ENCODE measurements at regions of chr1 and their contacts with region 1.

Region 1: GRCh38 chr1:157992031-157992832 is 1.2 kb upstream of the KIRREL1 start:
- DNase-seq: peak; percentile 70
- CTCF ChIP-seq: peak; percentile 88

Region 2: GRCh38 chr1:157862114-157863070 is 129.8 kb before region 1 on chr1:
- CTCF ChIA-PET with region 1: no interaction called
- POLR2A ChIA-PET with region 1: no interaction called
- DNase-seq: no peak
- CTCF ChIP-seq: no peak

Region 3: DNA sequence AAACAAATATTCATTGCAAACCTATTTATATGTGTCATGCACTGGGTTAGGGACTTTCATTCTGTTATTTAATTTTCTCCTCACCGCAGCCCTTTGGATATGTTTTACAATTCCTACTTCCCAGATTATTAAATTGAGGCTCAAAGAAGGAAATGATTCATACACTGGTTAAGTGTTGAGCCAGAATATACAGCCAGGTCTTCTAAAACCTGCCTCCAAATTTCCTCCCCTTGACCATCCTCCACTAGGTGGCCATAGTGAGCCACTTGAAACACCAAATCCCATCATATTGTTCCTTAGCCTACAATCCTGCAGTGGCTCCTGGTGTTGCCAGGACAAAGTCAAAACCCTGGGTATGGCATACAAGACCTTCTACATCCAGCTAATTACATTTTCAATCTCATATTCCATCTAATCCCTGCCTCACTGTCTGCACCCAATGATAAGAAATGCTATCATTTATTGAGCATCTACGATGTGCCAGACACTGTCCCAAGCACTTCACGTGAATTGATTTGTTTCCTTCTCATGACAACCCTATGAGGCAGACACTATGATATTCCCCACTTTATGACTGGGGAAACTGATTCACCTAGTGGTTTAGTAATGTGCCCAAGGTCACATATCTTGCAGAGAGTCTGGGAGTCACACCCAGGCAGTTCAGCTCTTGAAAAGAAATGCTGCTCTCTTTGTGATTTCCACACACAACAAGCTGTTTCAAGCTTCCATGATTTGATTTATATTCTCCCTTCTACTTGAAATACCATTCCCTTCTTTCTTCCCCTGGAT is 22.3 kb before region 1 on chr1:
- CTCF ChIA-PET with region 1: interaction called, 24 read pairs
- POLR2A ChIA-PET with region 1: no interaction called
- DNase-seq: peak; percentile 27
- CTCF ChIP-seq: peak; percentile 34

Region 4: DNA sequence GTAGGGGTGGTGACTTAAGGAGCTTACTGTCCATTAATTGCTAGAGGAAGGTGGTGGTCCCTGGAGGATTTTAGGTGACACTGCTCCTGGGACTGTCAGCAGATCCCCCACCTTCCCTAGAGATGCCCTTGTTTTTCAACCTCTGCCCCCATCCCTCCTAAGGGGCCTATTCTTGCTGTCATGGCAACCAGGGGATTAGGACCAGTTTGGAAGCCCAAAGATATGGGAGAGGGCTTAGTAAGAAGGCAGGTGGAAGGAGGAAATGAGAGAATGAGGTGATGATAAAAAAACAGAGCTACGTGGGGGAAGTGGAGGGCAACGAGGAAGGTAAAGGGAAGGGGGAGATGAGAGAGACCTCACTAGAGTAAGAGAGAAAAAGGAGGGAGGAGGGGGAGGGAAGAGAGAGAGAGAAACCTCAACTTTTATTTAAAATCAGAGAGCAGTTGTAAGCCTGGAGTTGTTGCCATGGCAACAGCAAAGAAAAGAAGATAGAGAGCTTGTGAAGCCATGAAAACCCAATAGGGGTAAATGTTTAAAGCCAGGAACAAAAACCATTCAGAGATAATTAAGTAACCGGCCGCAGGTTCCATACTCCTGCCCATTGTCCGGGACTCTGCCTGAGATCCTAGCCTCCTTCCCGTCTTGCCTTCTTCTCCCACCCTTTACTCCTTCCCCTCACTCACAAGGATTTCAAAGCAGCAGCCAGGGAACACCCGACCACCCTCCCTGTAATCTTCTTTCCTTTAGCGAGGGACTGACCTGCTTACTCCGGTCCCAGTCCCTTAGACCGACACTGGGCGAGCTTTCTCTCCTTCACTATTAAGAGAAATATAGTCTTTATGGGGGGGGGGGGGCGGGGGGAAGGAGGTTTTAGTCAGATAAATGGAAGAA is 21.9 kb after region 1 on chr1:
- CTCF ChIA-PET with region 1: interaction called, 24 read pairs
- POLR2A ChIA-PET with region 1: no interaction called
- DNase-seq: no peak
- CTCF ChIP-seq: no peak

Region 5: GRCh38 chr1:158117854-158118704 is 125.8 kb after region 1 on chr1:
- CTCF ChIA-PET with region 1: interaction called, 39 read pairs
- POLR2A ChIA-PET with region 1: no interaction called
- DNase-seq: peak; percentile 43
- CTCF ChIP-seq: peak; percentile 44

Measured in GM10248 (cell line).